ENCODE measurements at regions of chr7 and their contacts with region 1.

Region 1: DNA sequence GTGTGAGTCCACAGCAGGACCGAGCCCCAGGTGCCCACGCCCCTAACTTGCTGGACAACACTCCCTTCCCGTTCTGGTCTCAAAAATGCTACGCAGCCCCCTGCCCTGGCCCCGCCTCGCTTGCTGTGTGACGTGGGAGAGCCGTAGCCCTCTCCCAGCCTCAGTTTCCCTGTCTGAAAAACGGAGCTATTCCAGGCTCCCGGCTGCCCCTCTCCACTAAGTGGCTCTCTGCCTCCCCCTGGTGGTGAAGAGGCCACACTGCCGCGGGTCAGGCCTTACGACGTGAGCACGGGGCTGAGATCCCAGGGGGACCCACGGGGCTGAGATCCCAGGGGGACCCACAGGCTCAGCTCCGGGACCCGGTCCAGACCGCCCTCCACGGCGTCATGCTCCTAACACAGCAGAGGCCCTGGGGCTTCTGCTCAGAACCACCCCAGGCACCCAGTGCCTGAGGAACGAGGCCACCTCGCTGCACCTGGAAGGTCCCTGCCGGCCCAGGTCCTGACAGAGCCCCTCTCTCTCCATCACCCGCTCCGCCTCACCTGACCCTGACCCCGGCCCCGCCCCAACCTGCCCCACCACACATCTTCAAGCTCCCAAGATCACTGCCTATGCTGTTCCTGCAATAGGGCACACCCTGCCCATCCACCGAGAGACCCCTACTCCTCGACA is 26.7 kb downstream of the MICALL2 start:
- DNase-seq: peak; percentile 71 to 90 (median 90)
- ATAC-seq: peak; percentile 28 to 60
- H3K4me3 ChIP-seq: no peak overlapping the region
- H3K27ac ChIP-seq: no peak overlapping the region
- H3K4me1 ChIP-seq: no peaks in the 10 kb centered on the region
- H3K27me3 ChIP-seq: no peaks in the 10 kb centered on the region

Region 2: GRCh38 chr7:1193593-1194424 is 238.7 kb before region 1 on chr7:
- intact Hi-C with region 1: loop called in 2 of 4 experiments (anchors 5 to 10 kb)
- DNase-seq: peak in 2 of 3 donors; percentile 75 to 80
- ATAC-seq: peak; percentile 83 to 91
- H3K4me3 ChIP-seq: no peak overlapping the region
- H3K27ac ChIP-seq: no peak overlapping the region
- H3K4me1 ChIP-seq: no peaks in the 10 kb centered on the region
- H3K27me3 ChIP-seq: no peaks in the 10 kb centered on the region

Region 3: GRCh38 chr7:1368682-1369571 is 63.6 kb before region 1 on chr7:
- intact Hi-C with region 1: no loop called
- DNase-seq: peak in 2 of 3 donors; percentile 34 to 54
- ATAC-seq: peak; percentile 31 to 34
- H3K4me3 ChIP-seq: no peak overlapping the region
- H3K27ac ChIP-seq: no peak overlapping the region
- H3K4me1 ChIP-seq: no peaks in the 10 kb centered on the region
- H3K27me3 ChIP-seq: no peaks in the 10 kb centered on the region

Region 4: GRCh38 chr7:1473864-1474512 is 41.4 kb after region 1 on chr7:
- intact Hi-C with region 1: loop called in 1 of 4 experiments (anchors 5 kb)
- DNase-seq: peak; percentile 88 to 95 (median 95)
- ATAC-seq: peak; percentile 57 to 76
- H3K4me3 ChIP-seq: no peak overlapping the region
- H3K27ac ChIP-seq: no peak overlapping the region
- H3K4me1 ChIP-seq: no peaks in the 10 kb centered on the region
- H3K27me3 ChIP-seq: no peaks in the 10 kb centered on the region

Region 5: DNA sequence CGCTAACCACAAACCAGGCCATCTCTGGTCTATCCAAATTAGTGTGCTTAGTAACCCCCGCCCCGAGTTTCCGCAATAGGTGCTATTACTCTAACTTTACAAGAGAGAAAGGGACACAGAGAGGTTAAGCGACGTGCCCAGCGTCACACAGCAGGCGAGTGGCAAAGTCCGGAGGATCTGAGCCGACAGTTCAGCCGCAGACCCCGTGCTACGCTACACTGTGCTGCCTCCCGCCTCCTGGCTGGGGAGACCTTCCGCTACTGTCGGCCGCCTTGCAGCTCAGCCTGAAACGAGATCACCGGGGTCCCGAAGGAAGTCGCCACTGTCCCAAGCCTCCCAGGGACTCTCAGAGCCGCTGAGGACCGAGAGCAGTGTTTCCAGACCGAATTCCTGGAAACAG is 70.8 kb after region 1 on chr7:
- intact Hi-C with region 1: no loop called
- DNase-seq: peak in 2 of 3 donors; percentile 36 to 57
- ATAC-seq: no peak
- H3K4me3 ChIP-seq: peak overlapping the region; percentile 74
- H3K27ac ChIP-seq: no peak overlapping the region
- H3K4me1 ChIP-seq: peaks cover 7% of the 10 kb centered on the region
- H3K27me3 ChIP-seq: no peaks in the 10 kb centered on the region